ENCODE measurements at regions of chr3 and their contacts with region 1.

Region 1: GRCh38 chr3:30681643-30682211 is 75.3 kb downstream of the TGFBR2 start:
- DNase-seq: no peak

Region 2: GRCh38 chr3:30455840-30456239 is 225.9 kb before region 1 on chr3:
- intact Hi-C with region 1: no loop called
- DNase-seq: no peak

Region 3: GRCh38 chr3:30524357-30525040 is 157.2 kb before region 1 on chr3:
- intact Hi-C with region 1: loop called (anchors 5 kb)
- DNase-seq: no peak

Region 4: DNA sequence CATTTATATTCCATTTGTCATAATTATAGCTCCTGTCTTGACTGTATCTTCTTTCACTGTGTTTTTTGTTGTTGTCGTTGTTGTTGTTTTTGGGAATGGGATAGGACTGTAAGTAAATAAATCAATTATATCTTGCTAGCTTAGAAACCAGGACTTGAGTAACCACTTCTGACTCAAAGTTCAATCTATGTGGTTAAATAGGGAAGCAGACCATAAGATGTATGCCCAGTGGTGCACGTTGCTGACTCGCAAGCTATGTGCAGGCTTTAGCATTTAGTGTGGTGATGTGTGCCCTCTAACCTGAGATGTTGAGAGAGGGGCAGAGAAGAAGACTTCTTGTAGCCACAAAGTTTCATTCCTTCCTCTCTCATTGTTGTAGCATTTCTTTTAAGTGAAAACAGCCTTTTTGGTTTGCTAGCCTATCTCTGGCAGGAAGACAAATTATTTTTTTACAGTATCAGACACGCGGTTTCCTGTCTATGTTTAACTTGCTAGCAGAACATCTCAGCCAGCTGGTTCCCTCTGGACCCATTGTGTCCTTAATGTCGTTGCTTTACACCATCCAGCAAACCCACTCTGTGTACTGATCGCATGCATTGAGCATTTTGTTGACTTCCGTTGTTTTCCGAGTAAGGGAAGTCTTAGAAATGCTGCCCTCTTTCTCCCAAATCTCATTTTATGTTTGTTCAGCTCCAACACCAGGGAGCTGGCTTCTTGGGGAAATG is 23.2 kb before region 1 on chr3:
- intact Hi-C with region 1: loop called (anchors 2 kb)
- DNase-seq: no peak

Region 5: GRCh38 chr3:31188112-31188511 is 506.4 kb after region 1 on chr3:
- intact Hi-C with region 1: no loop called
- DNase-seq: no peak